ENCODE measurements at regions of chr7 and their contacts with region 1.

Region 1: GRCh38 chr7:88344956-88345832 is 38.5 kb upstream of the STEAP4 start:
- DNase-seq: peak; percentile 47
- H3K4me3 ChIP-seq: no peak overlapping the region
- H3K27ac ChIP-seq: no peak overlapping the region
- H3K4me1 ChIP-seq: no peaks in the 10 kb centered on the region; a peak in 1 of 4 replicates
- H3K27me3 ChIP-seq: peaks cover 7% of the 10 kb centered on the region; the same call in 1 of the 2 replicates
- CTCF ChIP-seq: peak; percentile 52
- EP300 ChIP-seq: no peak
- RAD21 ChIP-seq: peak; percentile 79

Region 2: GRCh38 chr7:88322151-88322550 is 23.0 kb before region 1 on chr7:
- CTCF ChIA-PET with region 1: interaction called, 10 read pairs
- POLR2A ChIA-PET with region 1: no interaction called
- DNase-seq: no peak
- H3K4me3 ChIP-seq: no peak overlapping the region
- H3K27ac ChIP-seq: no peak overlapping the region
- H3K4me1 ChIP-seq: no peaks in the 10 kb centered on the region; a peak in 1 of 4 replicates
- H3K27me3 ChIP-seq: 0 out of 2 replicates have a peak, but pooled peaks cover 4% of the 10 kb centered on the region
- CTCF ChIP-seq: no peak
- EP300 ChIP-seq: no peak
- RAD21 ChIP-seq: no peak

Region 3: DNA sequence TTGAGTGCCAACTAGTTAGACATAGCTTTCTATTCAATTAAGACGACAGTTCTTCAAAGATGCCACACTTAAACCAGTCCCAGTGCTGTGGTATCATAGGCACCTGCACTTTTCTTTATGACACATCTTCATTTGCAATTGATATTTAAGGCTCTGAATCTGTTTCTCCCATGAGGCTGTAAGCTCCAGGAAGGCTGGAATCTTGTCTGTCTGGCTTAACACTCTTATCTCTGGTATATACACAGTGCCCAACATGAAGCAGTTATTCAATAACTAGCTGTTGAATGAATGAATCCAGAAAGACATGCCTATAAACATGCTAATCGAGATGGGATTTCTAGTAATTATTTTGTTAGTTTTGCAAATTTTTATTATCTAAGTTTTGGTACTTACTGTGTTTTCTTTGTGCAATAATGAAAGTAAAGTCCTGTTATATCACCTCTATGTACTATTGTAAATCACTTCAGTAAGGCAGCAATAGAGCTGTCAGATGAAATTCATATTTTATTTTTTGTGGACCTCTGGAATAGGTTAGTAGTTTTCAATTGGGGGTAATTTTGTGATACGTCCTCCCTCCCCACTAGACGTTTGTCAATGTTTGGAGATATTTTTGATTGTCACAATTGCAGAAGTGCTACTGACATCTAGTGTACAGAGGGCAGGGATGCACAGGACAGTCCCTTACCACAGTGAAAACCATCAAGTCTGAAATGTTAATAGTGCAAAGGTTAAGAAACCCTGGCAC is 12.8 kb after region 1 on chr7:
- CTCF ChIA-PET with region 1: interaction called, 66 read pairs
- POLR2A ChIA-PET with region 1: no interaction called
- DNase-seq: peak; percentile 9
- H3K4me3 ChIP-seq: peak overlapping the region; percentile 16 to 19; a peak in 2 of 4 replicates
- H3K27ac ChIP-seq: no peak overlapping the region
- H3K4me1 ChIP-seq: no peaks in the 10 kb centered on the region; a peak in 2 of 4 replicates
- H3K27me3 ChIP-seq: no peaks in the 10 kb centered on the region
- CTCF ChIP-seq: peak; percentile 60
- EP300 ChIP-seq: no peak
- RAD21 ChIP-seq: peak; percentile 75

Measured in SK-N-SH (cell line).